ENCODE measurements at regions of chr15 and their contacts with region 1.

Region 1: GRCh38 chr15:85044251-85044853 is 62.7 kb downstream of the PDE8A start:
- DNase-seq: peak in 8 of 9 donors; percentile 15 to 43 (median 30)
- ATAC-seq: peak; percentile 61
- H3K4me3 ChIP-seq: no peak overlapping the region
- H3K4me3 Mint-ChIP-seq: no peak overlapping the region
- H3K27ac ChIP-seq: no peak overlapping the region
- H3K27ac Mint-ChIP-seq: peak overlapping the region in 3 of 9 donors; percentile 15 to 61 (median 53)
- H3K4me1 ChIP-seq: peaks cover 0 to 6% of the 10 kb centered on the region in 2 donors
- H3K4me1 Mint-ChIP-seq: peaks cover 7 to 44% (median 21%) of the 10 kb centered on the region in 7 donors
- H3K27me3 ChIP-seq: no peaks in the 10 kb centered on the region
- H3K27me3 Mint-ChIP-seq: no peaks in the 10 kb centered on the region

Region 2: GRCh38 chr15:84600851-84601838 is 443.2 kb before region 1 on chr15 and contains the start of gene ZSCAN2:
- CTCF ChIA-PET with region 1: no interaction called
- POLR2A ChIA-PET with region 1: no interaction called
- intact Hi-C with region 1: loop called in 1 of 2 experiments (anchors 10 kb)
- DNase-seq: peak; percentile 83 to 93 (median 90)
- ATAC-seq: peak; percentile 98
- H3K4me3 ChIP-seq: peak within 1 kb of the TSS; percentile 96
- H3K4me3 Mint-ChIP-seq: peak within 1 kb of the TSS; percentile 89 to 99 (median 96)
- H3K27ac ChIP-seq: peak within 1 kb of the TSS; percentile 77
- H3K27ac Mint-ChIP-seq: peak within 1 kb of the TSS; percentile 67 to 97 (median 88)
- H3K4me1 ChIP-seq: peaks cover 29 to 36% of the 10 kb centered on the region in 2 donors
- H3K4me1 Mint-ChIP-seq: peaks cover 53 to 89% (median 71%) of the 10 kb centered on the region in 7 donors
- H3K27me3 ChIP-seq: no peaks in the 10 kb centered on the region
- H3K27me3 Mint-ChIP-seq: no peaks in the 10 kb centered on the region
- total RNA-seq, gene ZSCAN2: 4.8 to 13.0 (median 6.8) TPM

Region 3: GRCh38 chr15:84844964-84845363 is 199.4 kb before region 1 on chr15:
- CTCF ChIA-PET with region 1: no interaction called
- POLR2A ChIA-PET with region 1: no interaction called
- intact Hi-C with region 1: loop called in 1 of 2 experiments (anchors 1 kb)
- DNase-seq: no peak
- ATAC-seq: no peak
- H3K4me3 ChIP-seq: no peak overlapping the region
- H3K4me3 Mint-ChIP-seq: no peak overlapping the region
- H3K27ac ChIP-seq: no peak overlapping the region
- H3K27ac Mint-ChIP-seq: no peak overlapping the region
- H3K4me1 ChIP-seq: no peaks in the 10 kb centered on the region
- H3K4me1 Mint-ChIP-seq: peaks cover 0 to 2% (median 0%) of the 10 kb centered on the region in 7 donors
- H3K27me3 ChIP-seq: no peaks in the 10 kb centered on the region
- H3K27me3 Mint-ChIP-seq: peaks cover 0 to 5% (median 0%) of the 10 kb centered on the region in 5 donors

Region 4: GRCh38 chr15:84955089-84955848 is 89.1 kb before region 1 on chr15:
- CTCF ChIA-PET with region 1: interaction called, 27 read pairs
- POLR2A ChIA-PET with region 1: interaction called, 3 read pairs
- intact Hi-C with region 1: loop called in 1 of 2 experiments (anchors 1 kb)
- DNase-seq: peak in 7 of 9 donors; percentile 11 to 40 (median 34)
- ATAC-seq: peak; percentile 74
- H3K4me3 ChIP-seq: no peak overlapping the region
- H3K4me3 Mint-ChIP-seq: peak overlapping the region in 3 of 10 donors; percentile 12 to 37 (median 33)
- H3K27ac ChIP-seq: no peak overlapping the region
- H3K27ac Mint-ChIP-seq: no peak overlapping the region
- H3K4me1 ChIP-seq: no peaks in the 10 kb centered on the region
- H3K4me1 Mint-ChIP-seq: peaks cover 4 to 12% (median 11%) of the 10 kb centered on the region in 7 donors
- H3K27me3 ChIP-seq: no peaks in the 10 kb centered on the region
- H3K27me3 Mint-ChIP-seq: peaks cover 5 to 39% (median 8%) of the 10 kb centered on the region in 5 donors

Region 5: DNA sequence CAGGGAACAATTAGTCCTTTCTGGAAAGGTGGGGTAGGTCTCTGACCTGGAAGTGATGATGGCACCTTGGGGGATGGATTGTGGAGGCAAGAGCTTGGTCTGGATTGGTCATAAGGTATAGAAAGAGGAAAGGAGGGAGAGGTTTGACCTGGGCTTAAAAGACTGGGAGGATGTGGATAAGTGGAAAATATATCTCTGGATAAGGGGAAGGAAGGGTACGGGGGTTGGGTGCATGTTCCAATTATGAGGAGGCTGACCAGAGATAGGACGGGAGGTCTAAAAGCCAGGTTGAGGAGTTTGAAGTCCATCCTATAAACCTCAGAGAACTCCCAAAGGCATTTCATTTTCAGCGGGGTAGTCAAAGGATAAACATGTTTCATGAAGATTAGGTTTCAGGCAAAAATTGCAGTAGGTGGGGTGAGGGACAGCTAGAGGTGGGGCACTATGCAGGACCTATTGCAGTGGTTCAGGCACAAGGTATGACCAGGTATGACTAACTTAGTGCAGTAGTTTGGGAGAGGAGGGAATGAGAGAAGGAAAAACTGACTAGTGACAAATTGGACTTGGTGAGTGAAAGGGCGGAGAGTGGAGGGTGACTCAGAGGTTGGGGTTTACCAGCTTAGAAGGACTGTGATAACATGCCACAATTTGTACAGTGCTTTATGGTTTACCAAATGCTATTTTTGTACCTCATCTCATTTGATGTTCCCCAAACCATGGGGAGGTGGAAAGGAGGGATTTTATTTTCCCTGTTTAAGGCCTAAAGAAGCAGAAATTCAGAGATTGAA is 52.0 kb before region 1 on chr15:
- CTCF ChIA-PET with region 1: interaction called, 10 read pairs
- POLR2A ChIA-PET with region 1: interaction called, 4 read pairs
- intact Hi-C with region 1: no loop called
- DNase-seq: peak in 1 of 9 donors; percentile 48
- ATAC-seq: peak; percentile 36
- H3K4me3 ChIP-seq: no peak overlapping the region
- H3K4me3 Mint-ChIP-seq: no peak overlapping the region
- H3K27ac ChIP-seq: no peak overlapping the region
- H3K27ac Mint-ChIP-seq: peak overlapping the region in 4 of 9 donors; percentile 18 to 53 (median 36)
- H3K4me1 ChIP-seq: peaks cover 5 to 27% of the 10 kb centered on the region in 2 donors
- H3K4me1 Mint-ChIP-seq: peaks cover 32 to 63% (median 54%) of the 10 kb centered on the region in 7 donors
- H3K27me3 ChIP-seq: no peaks in the 10 kb centered on the region
- H3K27me3 Mint-ChIP-seq: no peaks in the 10 kb centered on the region

Region 6: GRCh38 chr15:85125056-85125661 is 80.8 kb after region 1 on chr15:
- CTCF ChIA-PET with region 1: no interaction called
- POLR2A ChIA-PET with region 1: no interaction called
- intact Hi-C with region 1: no loop called
- DNase-seq: no peak
- ATAC-seq: no peak
- H3K4me3 ChIP-seq: no peak overlapping the region
- H3K4me3 Mint-ChIP-seq: no peak overlapping the region
- H3K27ac ChIP-seq: no peak overlapping the region
- H3K27ac Mint-ChIP-seq: no peak overlapping the region
- H3K4me1 ChIP-seq: no peaks in the 10 kb centered on the region
- H3K4me1 Mint-ChIP-seq: peaks cover 0 to 3% (median 0%) of the 10 kb centered on the region in 7 donors
- H3K27me3 ChIP-seq: no peaks in the 10 kb centered on the region
- H3K27me3 Mint-ChIP-seq: no peaks in the 10 kb centered on the region

Measured in naive thymus-derived CD4-positive, alpha-beta T cell (primary cell).